Endothelial cell of umbilical vein (primary cell): ENCODE measurements at regions of chr2 and their contacts with region 1.

Region 1: GRCh38 chr2:54634564-54635511 is 88.6 kb upstream of the EML6 start:
- DNase-seq: peak; percentile 92
- H3K4me3 ChIP-seq: no peak overlapping the region
- H3K27ac ChIP-seq: peak overlapping the region; percentile 91
- H3K4me1 ChIP-seq: peaks cover 37% of the 10 kb centered on the region
- H3K27me3 ChIP-seq: no peaks in the 10 kb centered on the region
- CTCF ChIP-seq: no peak
- POLR2A ChIP-seq: no peak

Region 2: DNA sequence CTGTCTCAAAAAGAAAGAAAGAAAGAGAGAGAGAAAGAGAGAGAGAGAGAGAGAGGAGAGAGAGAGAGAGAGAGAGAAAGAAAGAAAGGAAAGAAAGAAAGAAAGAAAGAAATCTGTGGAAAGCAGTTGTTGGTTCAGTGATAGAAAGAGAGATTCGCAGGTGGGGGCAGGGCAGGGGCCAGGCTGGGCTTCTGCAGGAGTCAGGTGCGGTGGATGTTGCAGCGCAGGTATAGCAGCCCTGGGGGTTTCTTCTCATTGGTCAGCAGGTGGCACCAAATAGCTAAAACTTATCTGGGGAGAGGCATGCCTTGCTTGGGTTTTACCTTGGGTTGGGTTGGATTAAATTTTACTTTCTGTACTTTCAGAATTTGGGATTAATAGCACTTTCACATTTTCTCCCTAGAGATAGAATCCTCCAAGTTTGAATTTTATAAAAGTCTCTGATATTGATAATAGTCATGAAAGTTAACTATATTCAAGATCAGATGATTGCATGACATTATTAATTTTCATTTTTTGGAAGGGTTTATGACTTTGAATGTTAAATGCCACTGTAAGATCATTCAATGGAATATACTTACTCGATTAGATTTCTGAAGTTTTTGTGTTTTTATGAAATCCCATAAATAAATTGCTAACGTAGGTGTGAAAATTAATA is 112.1 kb before region 1 on chr2:
- CTCF ChIA-PET with region 1: interaction called, 4 read pairs
- POLR2A ChIA-PET with region 1: no interaction called
- dilution Hi-C with region 1: no loop called
- intact Hi-C with region 1: loop called (anchors 1 kb)
- DNase-seq: peak; percentile 44
- H3K4me3 ChIP-seq: no peak overlapping the region
- H3K27ac ChIP-seq: no peak overlapping the region
- H3K4me1 ChIP-seq: peaks cover 10% of the 10 kb centered on the region
- H3K27me3 ChIP-seq: no peaks in the 10 kb centered on the region
- CTCF ChIP-seq: peak; percentile 48 to 68
- POLR2A ChIP-seq: no peak

Region 3: DNA sequence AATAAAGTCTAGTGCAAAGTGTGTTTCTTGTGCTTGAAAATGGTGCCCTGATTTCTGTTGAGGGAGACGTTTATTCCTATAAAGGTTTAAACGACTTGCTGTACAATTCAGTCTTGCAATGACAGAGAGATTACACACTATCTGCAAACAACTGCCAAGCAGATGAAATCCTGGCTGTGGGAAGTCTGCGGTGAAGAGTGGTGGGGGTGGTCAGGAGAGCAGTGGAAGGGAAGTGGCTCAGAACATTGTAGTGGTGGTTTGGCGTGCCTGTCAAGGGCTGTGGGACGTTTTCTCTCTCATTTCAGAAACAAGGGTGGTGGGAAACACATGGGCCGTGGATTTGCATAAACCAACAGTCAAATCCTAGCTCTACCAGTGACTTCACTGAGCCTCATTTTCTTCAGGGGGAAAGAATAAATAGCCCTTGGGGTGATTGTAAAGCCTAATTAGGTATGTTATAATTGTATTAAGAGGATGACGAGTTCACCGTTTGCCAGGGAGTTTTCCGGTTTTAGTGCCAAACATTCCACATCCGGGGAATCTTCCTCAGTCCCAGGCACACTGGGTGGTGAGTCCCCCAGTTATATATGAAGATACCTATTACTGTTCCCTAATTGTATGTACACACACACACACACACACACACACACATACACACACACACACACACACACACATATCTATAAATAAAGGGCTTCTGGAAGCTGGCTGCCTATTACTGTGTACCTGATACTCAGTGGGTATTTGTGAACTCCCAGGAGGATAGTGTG is 63.7 kb before region 1 on chr2:
- CTCF ChIA-PET with region 1: interaction called, 3 read pairs
- POLR2A ChIA-PET with region 1: no interaction called
- dilution Hi-C with region 1: no loop called
- intact Hi-C with region 1: loop called (anchors 1 kb)
- DNase-seq: peak; percentile 84
- H3K4me3 ChIP-seq: no peak overlapping the region
- H3K27ac ChIP-seq: peak overlapping the region; percentile 100
- H3K4me1 ChIP-seq: peaks cover 66% of the 10 kb centered on the region
- H3K27me3 ChIP-seq: no peaks in the 10 kb centered on the region
- CTCF ChIP-seq: no peak
- POLR2A ChIP-seq: no peak

Region 4: DNA sequence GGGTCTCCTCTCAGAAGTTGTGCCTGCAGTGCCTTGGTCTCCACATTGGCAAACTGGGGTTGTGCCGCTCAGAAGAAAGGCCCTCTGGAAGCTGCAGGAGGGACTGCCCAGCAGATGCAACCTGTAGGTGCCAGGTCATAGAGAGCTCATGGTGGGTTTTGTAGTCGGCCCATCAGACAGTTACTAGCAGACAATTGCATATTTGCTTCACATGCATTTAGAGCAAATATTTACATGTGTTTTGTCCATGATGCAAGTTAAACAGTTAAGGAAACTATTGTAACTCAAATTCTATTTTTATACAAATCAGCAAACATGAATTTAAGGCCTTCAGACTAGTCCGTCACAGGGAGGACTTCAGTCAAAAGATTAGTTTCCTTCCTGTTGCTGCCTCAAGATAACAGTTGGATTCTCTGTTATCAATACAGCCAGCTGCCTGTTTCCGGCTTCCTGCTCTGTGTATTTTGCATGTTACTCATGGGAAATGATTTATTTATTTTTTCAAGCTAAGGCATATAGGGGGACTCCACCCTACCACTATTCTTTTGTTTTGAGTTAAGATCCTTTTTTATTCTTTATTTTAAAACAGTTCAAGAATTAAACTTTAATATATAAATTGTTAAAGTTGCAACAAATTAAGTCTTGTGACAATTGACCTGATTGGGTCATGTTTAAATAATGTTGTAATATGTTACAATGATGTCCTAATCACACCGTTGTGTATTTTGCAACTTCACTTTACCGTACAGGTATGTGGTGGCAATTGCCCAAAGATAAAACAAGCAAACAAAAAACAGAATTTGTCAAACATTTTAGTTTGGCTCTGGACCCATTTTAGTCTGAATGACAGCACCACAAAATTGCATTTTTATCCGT is 45.3 kb before region 1 on chr2:
- CTCF ChIA-PET with region 1: interaction called, 4 read pairs
- POLR2A ChIA-PET with region 1: no interaction called
- dilution Hi-C with region 1: no loop called
- intact Hi-C with region 1: loop called (anchors 1 kb)
- DNase-seq: peak; percentile 99
- H3K4me3 ChIP-seq: peak overlapping the region in 1 of 3 experiments; percentile 46
- H3K27ac ChIP-seq: peak overlapping the region; percentile 91
- H3K4me1 ChIP-seq: peaks cover 64% of the 10 kb centered on the region
- H3K27me3 ChIP-seq: no peaks in the 10 kb centered on the region
- CTCF ChIP-seq: no peak
- POLR2A ChIP-seq: peak; percentile 95

Region 5: DNA sequence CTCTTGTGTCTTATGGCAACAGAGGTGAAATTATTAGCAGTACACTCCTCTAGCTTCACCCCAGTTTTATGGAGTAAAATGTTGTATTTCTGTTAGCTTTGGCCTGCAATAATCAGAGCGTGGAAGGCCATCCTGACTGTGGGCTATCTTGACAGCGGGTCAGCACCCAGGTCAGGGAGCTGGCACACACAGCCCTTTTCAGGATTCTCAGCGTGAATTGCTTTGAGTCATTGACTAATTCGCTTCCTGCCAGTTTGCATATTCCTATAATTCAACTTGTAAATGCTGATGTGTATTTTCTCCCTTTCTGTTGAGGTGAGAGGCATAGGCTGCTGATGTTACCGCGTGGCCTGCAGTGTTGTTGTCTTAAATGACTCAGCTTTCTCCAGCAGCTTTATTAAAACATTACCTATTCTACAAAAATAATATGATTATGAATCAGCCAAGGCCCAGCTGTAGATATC is 21.0 kb before region 1 on chr2:
- CTCF ChIA-PET with region 1: interaction called, 5 read pairs
- POLR2A ChIA-PET with region 1: no interaction called
- dilution Hi-C with region 1: no loop called
- intact Hi-C with region 1: loop called (anchors 1 kb)
- DNase-seq: peak; percentile 94
- H3K4me3 ChIP-seq: no peak overlapping the region
- H3K27ac ChIP-seq: peak overlapping the region; percentile 93
- H3K4me1 ChIP-seq: peaks cover 38% of the 10 kb centered on the region
- H3K27me3 ChIP-seq: no peaks in the 10 kb centered on the region
- CTCF ChIP-seq: no peak
- POLR2A ChIP-seq: no peak

Region 6: GRCh38 chr2:54624591-54625071 is 10.2 kb before region 1 on chr2:
- CTCF ChIA-PET with region 1: interaction called, 10 read pairs
- POLR2A ChIA-PET with region 1: no interaction called
- dilution Hi-C with region 1: no loop called
- intact Hi-C with region 1: no loop called
- DNase-seq: no peak
- H3K4me3 ChIP-seq: no peak overlapping the region
- H3K27ac ChIP-seq: no peak overlapping the region
- H3K4me1 ChIP-seq: no peaks in the 10 kb centered on the region
- H3K27me3 ChIP-seq: no peaks in the 10 kb centered on the region
- CTCF ChIP-seq: no peak
- POLR2A ChIP-seq: no peak

Region 7: GRCh38 chr2:54673501-54673998 is 38.7 kb after region 1 on chr2:
- CTCF ChIA-PET with region 1: no interaction called
- POLR2A ChIA-PET with region 1: no interaction called
- dilution Hi-C with region 1: no loop called
- intact Hi-C with region 1: loop called (anchors 1 kb)
- DNase-seq: peak; percentile 97
- H3K4me3 ChIP-seq: no peak overlapping the region
- H3K27ac ChIP-seq: peak overlapping the region; percentile 89
- H3K4me1 ChIP-seq: peaks cover 14% of the 10 kb centered on the region
- H3K27me3 ChIP-seq: peaks cover 0 to 2% of the 10 kb centered on the region in 2 experiments
- CTCF ChIP-seq: no peak
- POLR2A ChIP-seq: no peak

Region 8: DNA sequence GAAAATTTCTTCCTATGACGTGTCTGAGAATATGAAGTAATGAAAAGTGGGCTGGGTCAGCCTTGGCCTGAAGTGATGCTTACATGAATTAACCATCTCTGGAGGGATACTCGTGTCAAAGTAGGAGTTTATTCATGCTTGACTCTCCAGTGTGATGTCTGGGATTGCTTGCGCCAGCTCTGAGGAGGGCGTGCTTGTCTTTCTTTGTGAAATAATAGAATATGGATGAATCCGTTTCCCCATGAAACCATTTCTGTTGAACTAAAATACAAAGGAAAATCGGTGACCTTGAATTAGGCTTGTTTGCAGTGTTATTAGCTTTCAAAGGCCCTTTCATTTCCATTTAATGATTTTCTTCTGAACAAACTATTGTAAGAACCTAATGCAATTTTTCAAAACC is 166.5 kb after region 1 on chr2:
- CTCF ChIA-PET with region 1: no interaction called
- POLR2A ChIA-PET with region 1: no interaction called
- dilution Hi-C with region 1: no loop called
- intact Hi-C with region 1: no loop called
- DNase-seq: no peak
- H3K4me3 ChIP-seq: no peak overlapping the region
- H3K27ac ChIP-seq: no peak overlapping the region
- H3K4me1 ChIP-seq: no peaks in the 10 kb centered on the region
- H3K27me3 ChIP-seq: peaks cover 1 to 7% of the 10 kb centered on the region in 2 experiments
- CTCF ChIP-seq: no peak
- POLR2A ChIP-seq: no peak